ENCODE measurements at regions of chr3 and their contacts with region 1.

Region 1: DNA sequence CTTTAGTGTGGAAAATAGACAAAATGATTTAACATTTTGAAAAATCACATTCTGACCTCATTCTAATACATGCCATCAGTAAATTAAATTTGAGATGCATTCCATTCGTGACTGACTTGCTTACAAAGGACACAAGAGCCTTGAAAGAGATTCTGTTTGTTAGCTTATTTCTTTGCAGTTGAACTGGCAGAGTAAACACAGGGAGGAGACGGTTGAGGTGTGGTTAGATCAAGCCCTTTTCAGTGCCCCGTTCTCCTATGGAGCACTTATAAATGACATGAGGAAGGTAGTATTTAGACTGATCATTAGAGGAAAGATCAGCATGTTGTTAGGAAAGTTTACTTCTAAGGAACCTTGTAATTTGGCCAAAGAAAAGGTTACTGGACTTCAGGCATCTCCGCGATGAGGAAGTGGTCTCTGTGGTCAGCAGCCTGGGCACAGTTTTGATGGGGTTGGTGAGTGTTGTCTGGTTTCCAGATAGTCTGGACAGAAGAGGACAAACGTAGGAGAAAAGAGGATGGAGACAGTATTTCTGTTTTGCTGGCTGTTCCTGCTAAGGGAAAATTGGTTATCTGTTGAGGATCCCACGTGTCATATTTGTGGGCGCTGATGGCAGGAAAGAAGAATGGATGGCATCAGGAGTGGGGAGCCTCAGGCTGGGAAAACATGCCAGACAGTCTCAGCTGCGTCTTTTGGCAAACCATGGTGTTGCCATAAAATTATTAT is 328.9 kb upstream of the TBL1XR1 start:
- DNase-seq: peak in 1 of 2 donors; percentile 78
- H3K4me3 ChIP-seq: no peak overlapping the region
- H3K27ac ChIP-seq: peak overlapping the region; percentile 71 to 74
- H3K4me1 ChIP-seq: peaks cover 0 to 19% of the 10 kb centered on the region in 2 donors
- H3K27me3 ChIP-seq: no peaks in the 10 kb centered on the region
- CTCF ChIP-seq: no peak
- POLR2A ChIP-seq: no peak

Region 2: GRCh38 chr3:178244733-178245724 is 718.9 kb after region 1 on chr3:
- intact Hi-C with region 1: loop called (anchors 10 kb)
- DNase-seq: no peak
- H3K4me3 ChIP-seq: no peak overlapping the region
- H3K27ac ChIP-seq: no peak overlapping the region
- H3K4me1 ChIP-seq: no peaks in the 10 kb centered on the region
- H3K27me3 ChIP-seq: no peaks in the 10 kb centered on the region
- CTCF ChIP-seq: no peak
- POLR2A ChIP-seq: no peak

Measured in breast epithelium (tissue), 4 donors.